Endothelial cell of umbilical vein (primary cell): ENCODE measurements at regions of chr12 and their contacts with region 1.

Region 1: DNA sequence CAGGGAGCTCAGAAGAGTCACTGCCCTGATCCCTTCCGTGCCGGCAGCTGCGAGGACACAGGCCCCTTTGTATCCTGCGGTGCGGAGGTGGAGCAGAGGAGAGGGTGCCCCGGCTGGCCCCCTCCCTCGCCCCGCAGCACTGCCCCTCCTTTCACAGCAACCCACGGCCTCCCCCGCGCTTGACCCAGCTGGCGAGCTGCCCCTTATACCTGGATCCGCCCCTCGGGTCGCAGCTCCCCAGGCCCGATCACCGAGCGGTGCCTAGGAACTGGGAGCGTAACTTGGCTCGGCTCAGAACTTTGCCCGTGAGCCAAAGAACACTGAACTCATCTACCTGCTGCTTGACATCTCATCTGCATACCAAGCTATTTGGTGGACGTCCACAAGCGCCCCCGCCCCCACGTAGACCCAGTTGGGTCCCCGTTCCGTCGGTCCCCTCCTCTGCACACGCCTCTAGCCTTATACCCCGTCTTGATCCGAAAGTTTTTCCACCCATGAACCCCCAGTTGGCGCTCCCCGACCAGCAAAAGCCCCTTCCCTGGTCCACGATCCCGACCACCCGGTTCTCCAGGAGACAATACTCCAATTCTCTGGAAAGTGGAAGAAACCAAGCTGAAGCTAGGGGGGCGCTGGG is 697 bp upstream of the DNAJC14 start:
- DNase-seq: peak; percentile 70
- H3K4me3 ChIP-seq: peak overlapping the region; percentile 81 to 92 (median 82)
- H3K27ac ChIP-seq: peak overlapping the region; percentile 60
- H3K4me1 ChIP-seq: peaks cover 27% of the 10 kb centered on the region
- H3K27me3 ChIP-seq: no peaks in the 10 kb centered on the region
- CTCF ChIP-seq: no peak
- POLR2A ChIP-seq: no peak

Region 2: GRCh38 chr12:55847603-55848291 is 17.7 kb after region 1 on chr12:
- CTCF ChIA-PET with region 1: interaction called, 23 read pairs
- POLR2A ChIA-PET with region 1: interaction called, 25 read pairs
- dilution Hi-C with region 1: no loop called
- intact Hi-C with region 1: loop called (anchors 1 kb)
- DNase-seq: peak; percentile 94
- H3K4me3 ChIP-seq: no peak overlapping the region
- H3K27ac ChIP-seq: peak overlapping the region; percentile 99
- H3K4me1 ChIP-seq: peaks cover 18% of the 10 kb centered on the region
- H3K27me3 ChIP-seq: no peaks in the 10 kb centered on the region
- CTCF ChIP-seq: no peak
- POLR2A ChIP-seq: peak; percentile 78

Region 3: DNA sequence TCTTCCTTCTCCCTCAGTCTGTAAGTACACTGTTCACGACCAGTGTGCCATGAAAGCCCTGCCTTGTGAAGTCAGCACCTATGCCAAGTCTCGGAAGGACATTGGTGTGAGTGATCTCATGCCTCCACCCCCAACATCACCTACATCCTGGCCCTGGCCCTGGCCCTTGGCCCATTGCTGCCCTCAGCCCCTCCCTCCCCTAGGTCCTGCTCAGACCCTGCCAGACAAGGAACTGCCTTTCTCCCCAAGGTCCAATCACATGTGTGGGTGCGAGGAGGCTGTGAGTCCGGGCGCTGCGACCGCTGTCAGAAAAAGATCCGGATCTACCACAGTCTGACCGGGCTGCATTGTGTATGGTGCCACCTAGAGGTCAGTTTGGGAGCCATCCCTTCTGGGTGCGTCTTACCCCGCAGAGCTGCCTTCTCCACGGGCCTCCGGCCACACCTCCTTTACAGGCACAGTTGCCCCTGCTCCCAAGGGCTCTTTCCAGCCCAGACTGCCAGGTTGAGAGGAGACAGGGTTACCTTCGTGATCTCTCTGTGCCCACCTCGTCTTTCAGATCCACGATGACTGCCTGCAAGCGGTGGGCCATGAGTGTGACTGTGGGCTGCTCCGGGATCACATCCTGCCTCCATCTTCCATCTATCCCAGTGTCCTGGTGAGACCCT is 110.1 kb after region 1 on chr12:
- CTCF ChIA-PET with region 1: interaction called, 19 read pairs
- POLR2A ChIA-PET with region 1: no interaction called
- dilution Hi-C with region 1: no loop called
- intact Hi-C with region 1: no loop called
- DNase-seq: peak; percentile 85
- H3K4me3 ChIP-seq: no peak overlapping the region
- H3K27ac ChIP-seq: no peak overlapping the region
- H3K4me1 ChIP-seq: no peaks in the 10 kb centered on the region
- H3K27me3 ChIP-seq: no peaks in the 10 kb centered on the region
- CTCF ChIP-seq: peak; percentile 89 to 98
- POLR2A ChIP-seq: no peak

Region 4: GRCh38 chr12:56087220-56087619 is 257.1 kb after region 1 on chr12:
- CTCF ChIA-PET with region 1: no interaction called
- POLR2A ChIA-PET with region 1: no interaction called
- dilution Hi-C with region 1: no loop called
- intact Hi-C with region 1: no loop called
- DNase-seq: no peak
- H3K4me3 ChIP-seq: no peak overlapping the region
- H3K27ac ChIP-seq: no peak overlapping the region
- H3K4me1 ChIP-seq: peaks cover 13% of the 10 kb centered on the region
- H3K27me3 ChIP-seq: peaks cover 3% of the 10 kb centered on the region in 2 experiments
- CTCF ChIP-seq: no peak
- POLR2A ChIP-seq: no peak